ENCODE measurements at regions of chr10 and their contacts with region 1.

Region 1: DNA sequence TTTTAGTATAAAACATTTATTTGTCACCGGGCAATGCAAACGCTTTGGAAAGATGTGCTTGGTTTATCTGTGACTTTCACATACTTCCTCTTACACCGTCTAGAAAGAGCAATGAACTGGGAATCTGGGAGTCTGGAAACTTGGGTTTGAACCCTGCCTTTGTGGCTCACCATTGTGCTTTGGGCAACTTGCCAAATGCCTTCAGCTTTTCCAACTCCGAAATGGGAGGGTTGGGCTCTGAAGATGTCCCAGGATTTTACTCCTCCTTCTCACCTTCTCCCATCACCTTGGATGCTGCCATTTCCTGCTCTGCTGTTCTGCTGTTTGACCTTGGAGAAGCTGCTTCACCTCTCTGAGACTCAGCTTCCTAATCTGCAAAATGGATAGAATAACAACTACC is 111.0 kb downstream of the CDH23 start:
- DNase-seq: no peak
- H3K4me3 ChIP-seq: no peak overlapping the region
- CTCF ChIP-seq: no peak
- POLR2A ChIP-seq: no peak

Region 2: DNA sequence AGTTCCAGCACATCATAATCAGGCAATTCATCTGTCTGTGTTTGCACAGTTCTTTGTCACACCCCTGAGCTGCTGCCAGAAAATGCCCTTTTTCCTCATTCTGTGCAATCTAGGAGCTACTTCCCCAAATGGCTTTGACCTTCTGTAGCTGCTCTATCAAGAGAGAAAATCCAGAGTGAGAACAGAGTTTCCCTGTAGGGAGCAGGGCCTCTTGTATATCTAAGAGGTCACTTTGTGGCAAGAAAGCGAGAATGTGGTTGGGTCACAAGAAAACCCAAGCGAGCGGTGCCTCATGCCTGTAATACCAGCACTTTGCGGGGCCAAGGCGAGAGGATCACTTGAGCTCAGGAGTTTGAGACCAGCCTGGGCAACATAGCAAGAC is 164.4 kb before region 1 on chr10:
- intact Hi-C with region 1: no loop called
- DNase-seq: no peak
- H3K4me3 ChIP-seq: no peak overlapping the region
- CTCF ChIP-seq: no peak
- POLR2A ChIP-seq: no peak

Region 3: DNA sequence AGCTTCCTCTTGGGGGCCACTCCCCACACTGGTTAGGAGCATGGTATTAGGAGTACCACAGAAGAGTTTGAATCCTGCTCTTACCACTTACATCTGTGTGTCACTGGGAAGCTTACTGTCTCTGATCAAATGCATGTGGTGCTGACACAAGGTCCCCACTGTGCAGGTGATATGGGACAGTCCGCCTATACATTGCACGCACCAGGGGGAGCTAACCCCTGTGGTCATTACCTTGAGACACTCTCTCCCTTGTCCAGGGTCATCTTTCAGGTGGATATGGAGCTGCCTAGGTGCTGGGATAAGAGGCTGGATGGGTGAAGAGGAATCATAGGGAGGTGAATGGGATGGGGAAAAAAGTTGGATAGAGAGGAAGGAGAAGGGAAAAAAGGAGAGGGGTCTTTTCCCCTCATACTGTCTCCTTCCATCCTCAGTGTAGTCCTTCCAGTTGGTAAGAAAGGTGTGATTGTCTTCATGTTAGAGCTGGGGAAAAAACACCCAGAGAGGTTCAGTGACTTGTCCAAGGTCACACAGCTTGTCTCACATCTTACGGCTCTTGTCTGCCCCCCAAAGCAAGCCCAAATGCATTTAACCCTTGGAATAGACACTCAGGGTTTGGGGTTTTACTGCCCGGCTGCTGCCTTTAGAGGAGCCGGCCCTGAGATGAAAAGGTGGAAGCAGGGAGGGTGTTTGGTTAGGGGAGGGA is 14.8 kb after region 1 on chr10:
- intact Hi-C with region 1: no loop called
- DNase-seq: no peak
- H3K4me3 ChIP-seq: no peak overlapping the region
- CTCF ChIP-seq: no peak
- POLR2A ChIP-seq: no peak

Region 4: DNA sequence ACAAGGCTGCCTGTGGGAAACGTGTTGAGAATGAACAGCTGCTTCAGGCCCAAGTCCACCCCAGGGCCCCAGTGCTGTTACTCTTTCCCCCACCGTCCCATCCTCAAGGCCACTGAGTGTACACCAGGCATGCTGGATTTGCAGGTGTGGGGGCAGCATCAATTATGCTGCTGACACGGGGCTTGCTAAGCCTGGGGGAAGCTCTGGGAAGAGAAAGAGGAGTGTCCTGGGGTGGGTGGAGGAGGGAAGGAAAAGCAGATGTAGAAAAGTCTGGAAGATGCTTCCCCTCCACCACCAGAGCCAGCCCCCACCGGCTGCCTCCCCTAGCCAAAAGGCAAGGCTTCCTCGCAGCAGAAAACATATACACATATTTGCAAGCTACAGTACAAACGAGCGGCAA is 42.9 kb after region 1 on chr10:
- intact Hi-C with region 1: loop called (anchors 1 kb)
- DNase-seq: no peak
- H3K4me3 ChIP-seq: no peak overlapping the region
- CTCF ChIP-seq: no peak
- POLR2A ChIP-seq: no peak